GM10248 (cell line): ENCODE measurements at regions of chr2 and their contacts with region 1.

Region 1: DNA sequence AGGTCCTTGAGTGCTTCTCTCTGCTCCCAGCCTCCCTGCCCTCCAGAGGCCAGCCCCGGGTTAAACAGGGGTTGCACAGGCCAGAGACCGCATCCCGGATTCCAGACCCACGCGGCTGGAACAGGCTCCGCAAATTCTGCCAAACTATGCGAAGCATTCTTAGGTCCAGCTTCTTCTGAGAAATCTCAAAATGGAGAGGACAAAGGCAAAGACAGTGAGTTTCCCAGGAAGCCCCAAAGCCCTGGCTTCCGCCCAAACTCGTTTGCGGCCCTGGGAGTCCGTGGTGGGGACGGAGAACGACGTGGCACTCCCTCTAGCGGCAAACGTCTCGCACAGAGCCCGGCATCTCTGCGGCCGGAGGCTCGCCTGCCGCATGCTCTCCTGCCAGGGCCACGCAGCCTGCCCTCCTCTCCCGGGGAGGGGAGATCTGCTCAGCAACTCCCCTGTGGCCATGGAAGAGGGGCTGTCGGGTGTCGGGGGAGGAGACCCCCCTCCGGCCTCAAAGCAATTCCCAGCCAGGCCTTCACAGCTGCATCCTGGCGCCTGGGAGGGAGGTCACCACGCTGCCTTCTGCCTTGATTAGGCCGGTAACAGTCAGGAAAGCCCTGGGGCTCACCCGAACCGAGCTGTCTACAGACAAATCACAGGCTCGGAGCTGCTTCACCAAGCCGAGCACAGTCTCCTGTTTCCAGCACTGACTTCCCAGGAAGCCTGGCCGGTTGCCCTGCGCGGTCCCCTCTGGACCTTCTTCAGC is 33.4 kb upstream of the KLHL29 start:
- DNase-seq: peak; percentile 90
- CTCF ChIP-seq: peak; percentile 92

Region 2: GRCh38 chr2:23363831-23364230 is 12.3 kb after region 1 on chr2:
- CTCF ChIA-PET with region 1: interaction called, 13 read pairs
- POLR2A ChIA-PET with region 1: no interaction called
- DNase-seq: no peak
- CTCF ChIP-seq: no peak